Activated naive CD4-positive, alpha-beta T cell treated with anti-CD3 and anti-CD28 coated beads for 36 hours (primary cell): ENCODE measurements at regions of chr5 and their contacts with region 1.

Region 1: GRCh38 chr5:56496581-56497063 is 263.5 kb upstream of the ANKRD55 start:
- DNase-seq: no peak
- H3K4me3 Mint-ChIP-seq: no peak overlapping the region
- H3K27ac Mint-ChIP-seq: no peak overlapping the region
- H3K4me1 Mint-ChIP-seq: peaks cover 21% of the 10 kb centered on the region
- H3K27me3 Mint-ChIP-seq: no peaks in the 10 kb centered on the region

Region 2: DNA sequence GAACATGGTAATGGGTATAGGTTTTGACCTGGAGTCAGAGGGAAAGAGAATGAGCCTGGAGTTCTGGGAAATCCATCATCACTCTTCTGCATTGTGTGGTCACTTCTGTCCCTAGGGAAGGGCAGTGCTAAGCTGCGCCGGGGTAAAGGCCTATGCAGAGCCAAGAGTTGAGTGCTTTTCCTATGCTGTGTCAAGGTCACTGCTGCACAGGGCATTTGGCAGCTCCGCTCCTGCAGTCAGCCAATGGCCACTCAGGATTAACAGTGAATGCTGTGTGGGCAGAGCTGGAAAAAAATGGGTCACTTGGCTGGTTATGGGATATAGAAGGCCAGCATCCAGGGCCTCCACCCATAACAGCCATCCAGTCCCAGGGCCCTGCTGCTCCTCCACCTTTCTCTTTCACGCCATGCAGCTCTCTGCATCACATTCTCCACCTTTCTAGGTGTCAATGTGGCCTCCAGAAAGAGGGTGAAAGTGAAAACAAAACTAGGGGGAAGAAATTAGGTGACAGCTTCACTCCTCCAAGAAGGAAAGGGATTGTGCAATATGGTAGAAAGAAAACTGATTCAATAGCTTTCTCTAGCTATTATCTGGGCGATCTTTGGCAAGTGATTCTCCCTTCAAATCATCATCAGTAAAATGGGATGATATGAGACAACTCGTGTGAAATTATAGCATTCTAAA is 15.8 kb after region 1 on chr5:
- CTCF ChIA-PET with region 1: no interaction called
- intact Hi-C with region 1: loop called (anchors 2 kb)
- DNase-seq: no peak
- H3K4me3 Mint-ChIP-seq: no peak overlapping the region
- H3K27ac Mint-ChIP-seq: no peak overlapping the region
- H3K4me1 Mint-ChIP-seq: peaks cover 14% of the 10 kb centered on the region
- H3K27me3 Mint-ChIP-seq: no peaks in the 10 kb centered on the region

Region 3: DNA sequence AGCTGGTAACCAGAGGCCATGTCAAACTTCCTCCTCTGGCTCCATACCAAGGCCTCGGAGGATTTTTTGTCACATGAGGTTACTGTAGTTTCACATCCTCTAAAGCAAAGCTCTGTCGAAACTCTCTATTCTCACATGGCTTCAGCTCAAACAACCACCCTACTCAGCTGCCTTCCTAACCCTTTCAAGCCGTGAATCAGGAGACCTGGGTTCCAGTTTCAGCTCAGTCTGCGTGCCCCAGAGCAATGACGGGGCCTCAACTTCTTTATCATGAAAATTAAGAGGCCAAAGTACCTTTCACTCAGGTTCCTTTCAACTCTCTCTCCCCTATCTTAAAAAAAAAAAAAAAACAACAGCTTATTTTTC is 173.5 kb after region 1 on chr5:
- CTCF ChIA-PET with region 1: no interaction called
- intact Hi-C with region 1: no loop called
- DNase-seq: peak; percentile 67
- H3K4me3 Mint-ChIP-seq: no peak overlapping the region
- H3K27ac Mint-ChIP-seq: no peak overlapping the region
- H3K4me1 Mint-ChIP-seq: peaks cover 27% of the 10 kb centered on the region
- H3K27me3 Mint-ChIP-seq: no peaks in the 10 kb centered on the region